ENCODE measurements at regions of chr6 and their contacts with region 1.

Region 1: GRCh38 chr6:130000526-130001421 is 17.6 kb upstream of the L3MBTL3 start:
- DNase-seq: no peak
- ATAC-seq: no peak
- H3K4me3 ChIP-seq: no peak overlapping the region
- H3K4me3 Mint-ChIP-seq: no peak overlapping the region
- H3K27ac ChIP-seq: no peak overlapping the region
- H3K27ac Mint-ChIP-seq: no peak overlapping the region
- H3K4me1 ChIP-seq: no peaks in the 10 kb centered on the region
- H3K4me1 Mint-ChIP-seq: no peaks in the 10 kb centered on the region
- H3K27me3 ChIP-seq: no peaks in the 10 kb centered on the region
- H3K27me3 Mint-ChIP-seq: peaks cover 8% of the 10 kb centered on the region
- CTCF ChIP-seq: no peak

Region 2: DNA sequence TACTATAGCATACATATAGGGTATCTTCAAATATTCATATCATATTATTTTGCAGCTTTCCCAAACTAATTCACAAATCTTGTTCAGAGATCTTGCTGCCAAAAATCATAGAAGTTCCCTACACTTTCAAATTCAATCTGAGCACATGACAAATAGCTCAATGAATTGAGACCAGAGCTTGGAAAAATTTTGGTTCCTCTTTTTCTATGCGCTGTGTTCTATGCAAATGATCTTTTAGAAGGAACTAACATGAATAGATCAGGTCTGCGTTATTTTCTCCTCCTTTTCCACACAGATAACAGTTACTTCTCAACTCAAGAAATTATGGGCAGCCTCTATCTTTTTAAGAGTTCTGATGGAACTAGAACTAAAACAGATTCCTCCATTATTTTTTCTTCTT is 607.1 kb before region 1 on chr6:
- CTCF ChIA-PET with region 1: no interaction called
- POLR2A ChIA-PET with region 1: no interaction called
- intact Hi-C with region 1: no loop called
- DNase-seq: no peak
- ATAC-seq: no peak
- H3K4me3 ChIP-seq: no peak overlapping the region
- H3K4me3 Mint-ChIP-seq: no peak overlapping the region
- H3K27ac ChIP-seq: no peak overlapping the region
- H3K27ac Mint-ChIP-seq: no peak overlapping the region
- H3K4me1 ChIP-seq: no peaks in the 10 kb centered on the region
- H3K4me1 Mint-ChIP-seq: no peaks in the 10 kb centered on the region
- H3K27me3 ChIP-seq: no peaks in the 10 kb centered on the region
- H3K27me3 Mint-ChIP-seq: peaks cover 2% of the 10 kb centered on the region
- CTCF ChIP-seq: no peak

Region 3: GRCh38 chr6:129481706-129482105 is 519.1 kb before region 1 on chr6:
- CTCF ChIA-PET with region 1: no interaction called
- POLR2A ChIA-PET with region 1: no interaction called
- intact Hi-C with region 1: loop called in 1 of 2 experiments (anchors 5 kb)
- DNase-seq: no peak
- ATAC-seq: no peak
- H3K4me3 ChIP-seq: no peak overlapping the region
- H3K4me3 Mint-ChIP-seq: no peak overlapping the region
- H3K27ac ChIP-seq: no peak overlapping the region
- H3K27ac Mint-ChIP-seq: no peak overlapping the region
- H3K4me1 ChIP-seq: no peaks in the 10 kb centered on the region
- H3K4me1 Mint-ChIP-seq: no peaks in the 10 kb centered on the region
- H3K27me3 ChIP-seq: no peaks in the 10 kb centered on the region
- H3K27me3 Mint-ChIP-seq: no peaks in the 10 kb centered on the region
- CTCF ChIP-seq: no peak

Region 4: DNA sequence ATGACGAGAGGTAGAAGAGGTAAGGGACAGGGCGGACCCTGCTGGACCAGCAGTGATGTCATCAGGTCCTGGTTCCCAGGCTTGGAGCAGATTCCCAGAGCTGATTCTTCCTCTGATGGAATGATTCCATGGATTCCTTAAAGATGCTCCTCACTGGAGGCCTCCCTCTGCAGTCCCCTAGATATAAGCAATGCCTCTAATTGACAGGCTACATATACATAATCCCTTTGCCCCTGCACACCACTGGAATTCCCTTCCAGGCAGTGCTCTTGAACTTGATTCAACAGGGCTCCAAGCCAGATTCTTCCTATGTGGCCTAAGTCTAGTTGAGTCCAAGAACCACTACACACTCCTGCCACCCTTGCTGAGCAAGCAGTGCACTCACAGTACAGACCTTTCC is 34.6 kb before region 1 on chr6:
- CTCF ChIA-PET with region 1: no interaction called
- POLR2A ChIA-PET with region 1: no interaction called
- intact Hi-C with region 1: no loop called
- DNase-seq: no peak
- ATAC-seq: no peak
- H3K4me3 ChIP-seq: no peak overlapping the region
- H3K4me3 Mint-ChIP-seq: no peak overlapping the region
- H3K27ac ChIP-seq: no peak overlapping the region
- H3K27ac Mint-ChIP-seq: no peak overlapping the region
- H3K4me1 ChIP-seq: no peaks in the 10 kb centered on the region
- H3K4me1 Mint-ChIP-seq: no peaks in the 10 kb centered on the region
- H3K27me3 ChIP-seq: peaks cover 0 to 7% of the 10 kb centered on the region in 2 experiments
- H3K27me3 Mint-ChIP-seq: peaks cover 17% of the 10 kb centered on the region
- CTCF ChIP-seq: no peak